ENCODE measurements at regions of chr7 and their contacts with region 1.

Region 1: GRCh38 chr7:28078036-28078901 is 102.3 kb downstream of the JAZF1 start:
- DNase-seq: peak; percentile 24
- H3K4me3 ChIP-seq: no peak overlapping the region
- H3K27ac ChIP-seq: no peak overlapping the region
- H3K4me1 ChIP-seq: no peaks in the 10 kb centered on the region
- H3K27me3 ChIP-seq: no peaks in the 10 kb centered on the region
- CTCF ChIP-seq: peak; percentile 98 to 100

Region 2: GRCh38 chr7:27689591-27690164 is 388.6 kb before region 1 on chr7:
- CTCF ChIA-PET with region 1: no interaction called
- dilution Hi-C with region 1: no loop called
- in situ Hi-C with region 1: no loop called
- intact Hi-C with region 1: loop called (anchors 5 kb)
- DNase-seq: peak; percentile 32
- H3K4me3 ChIP-seq: no peak overlapping the region
- H3K27ac ChIP-seq: no peak overlapping the region
- H3K4me1 ChIP-seq: peaks cover 6% of the 10 kb centered on the region
- H3K27me3 ChIP-seq: no peaks in the 10 kb centered on the region
- CTCF ChIP-seq: peak; percentile 40 to 60

Region 3: GRCh38 chr7:27921081-27921836 is 157.0 kb before region 1 on chr7:
- CTCF ChIA-PET with region 1: no interaction called
- dilution Hi-C with region 1: no loop called
- in situ Hi-C with region 1: no loop called
- intact Hi-C with region 1: loop called (anchors 5 kb)
- DNase-seq: peak; percentile 56
- H3K4me3 ChIP-seq: no peak overlapping the region
- H3K27ac ChIP-seq: no peak overlapping the region
- H3K4me1 ChIP-seq: peaks cover 23% of the 10 kb centered on the region
- H3K27me3 ChIP-seq: no peaks in the 10 kb centered on the region
- CTCF ChIP-seq: peak; percentile 32 to 55

Region 4: DNA sequence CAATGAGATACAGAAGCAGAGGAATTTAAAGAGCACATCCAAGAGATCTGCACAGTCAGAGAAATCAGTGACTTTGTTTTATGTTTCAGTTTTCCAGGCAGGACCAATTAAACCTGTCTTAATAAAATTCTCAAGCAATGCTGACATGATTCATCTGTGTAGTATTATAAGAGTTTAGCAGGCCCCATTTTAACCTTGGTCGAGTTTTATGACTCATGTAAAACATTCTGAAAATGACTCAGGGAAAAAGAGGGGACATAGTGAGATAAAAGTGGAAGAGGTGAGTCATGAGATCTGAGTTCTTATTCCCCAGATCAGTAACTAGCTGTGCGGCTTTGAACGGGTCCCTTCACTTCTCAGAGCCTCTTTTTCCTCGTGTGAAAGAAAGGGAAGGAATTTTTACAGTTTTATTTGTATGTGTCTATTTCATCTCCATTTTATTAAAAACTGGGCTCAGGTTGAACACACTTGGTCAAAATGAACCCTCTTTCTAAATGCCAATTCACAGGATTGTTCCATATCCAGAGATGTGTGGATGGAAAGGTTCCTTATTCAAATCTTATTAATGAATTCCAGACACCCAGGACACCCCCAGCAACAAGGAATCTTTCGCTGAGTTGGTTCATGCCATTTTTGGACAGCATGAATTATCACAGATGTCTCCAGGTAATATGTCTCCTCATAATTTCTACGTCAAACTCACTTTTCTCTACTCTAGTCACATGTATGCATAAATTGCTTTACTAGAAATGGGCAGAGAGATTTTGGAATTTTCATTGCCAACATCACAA is 40.9 kb before region 1 on chr7:
- CTCF ChIA-PET with region 1: no interaction called
- dilution Hi-C with region 1: no loop called
- in situ Hi-C with region 1: no loop called
- intact Hi-C with region 1: loop called (anchors 2 kb)
- DNase-seq: peak; percentile 96
- H3K4me3 ChIP-seq: peak overlapping the region in 1 of 3 experiments; percentile 10
- H3K27ac ChIP-seq: peak overlapping the region; percentile 73
- H3K4me1 ChIP-seq: peaks cover 65% of the 10 kb centered on the region
- H3K27me3 ChIP-seq: no peaks in the 10 kb centered on the region
- CTCF ChIP-seq: no peak

Region 5: GRCh38 chr7:28121496-28121895 is 43.2 kb after region 1 on chr7:
- CTCF ChIA-PET with region 1: interaction called, 11 read pairs
- dilution Hi-C with region 1: no loop called
- in situ Hi-C with region 1: no loop called
- intact Hi-C with region 1: no loop called
- DNase-seq: no peak
- H3K4me3 ChIP-seq: no peak overlapping the region
- H3K27ac ChIP-seq: no peak overlapping the region
- H3K4me1 ChIP-seq: no peaks in the 10 kb centered on the region
- H3K27me3 ChIP-seq: no peaks in the 10 kb centered on the region
- CTCF ChIP-seq: no peak

Region 6: GRCh38 chr7:28358423-28358868 is 280.2 kb after region 1 on chr7:
- CTCF ChIA-PET with region 1: no interaction called
- dilution Hi-C with region 1: no loop called
- in situ Hi-C with region 1: no loop called
- intact Hi-C with region 1: no loop called
- DNase-seq: peak; percentile 96
- H3K4me3 ChIP-seq: no peak overlapping the region
- H3K27ac ChIP-seq: no peak overlapping the region
- H3K4me1 ChIP-seq: peaks cover 31% of the 10 kb centered on the region
- H3K27me3 ChIP-seq: no peaks in the 10 kb centered on the region
- CTCF ChIP-seq: no peak

Measured in mammary epithelial cell (primary cell).